A549 (cell line): ENCODE measurements at regions of chr20 and their contacts with region 1.

Region 1: GRCh38 chr20:33299111-33299603 is 16.1 kb downstream of the BPIFB1 start:
- DNase-seq: peak; percentile 54 to 72
- ATAC-seq: peak; percentile 77 to 94
- H3K4me3 ChIP-seq: no peak overlapping the region
- H3K27ac ChIP-seq: no peak overlapping the region
- H3K4me1 ChIP-seq: 0 out of 3 replicates have a peak, but pooled peaks cover 3% of the 10 kb centered on the region
- CTCF ChIP-seq: peak; percentile 79
- EP300 ChIP-seq: no peak
- POLR2A ChIP-seq: no peak
- RAD21 ChIP-seq: peak; percentile 75 to 81

Region 2: DNA sequence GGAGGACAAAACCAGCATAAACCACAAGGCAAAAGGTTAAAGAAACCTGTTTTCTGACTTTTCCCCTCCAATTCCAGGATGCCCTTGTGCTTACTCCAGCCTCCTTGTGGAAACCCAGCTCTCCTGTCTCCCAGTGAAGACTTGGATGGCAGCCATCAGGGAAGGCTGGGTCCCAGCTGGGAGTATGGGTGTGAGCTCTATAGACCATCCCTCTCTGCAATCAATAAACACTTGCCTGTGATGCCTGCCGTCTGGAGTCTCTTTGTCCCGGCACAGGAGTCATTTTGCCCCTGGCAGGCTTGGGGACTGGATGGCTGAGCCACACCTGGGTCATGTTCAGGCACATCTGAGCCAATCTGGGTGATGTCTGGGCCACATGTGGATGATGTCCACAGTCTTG is 10.5 kb after region 1 on chr20:
- CTCF ChIA-PET with region 1: interaction called, 28 read pairs
- POLR2A ChIA-PET with region 1: no interaction called
- DNase-seq: no peak
- ATAC-seq: no peak
- H3K4me3 ChIP-seq: no peak overlapping the region
- H3K27ac ChIP-seq: no peak overlapping the region
- H3K4me1 ChIP-seq: peaks cover 7% of the 10 kb centered on the region
- CTCF ChIP-seq: no peak
- EP300 ChIP-seq: no peak
- POLR2A ChIP-seq: no peak
- RAD21 ChIP-seq: no peak